ENCODE measurements at regions of chr5 and their contacts with region 1.

Region 1: DNA sequence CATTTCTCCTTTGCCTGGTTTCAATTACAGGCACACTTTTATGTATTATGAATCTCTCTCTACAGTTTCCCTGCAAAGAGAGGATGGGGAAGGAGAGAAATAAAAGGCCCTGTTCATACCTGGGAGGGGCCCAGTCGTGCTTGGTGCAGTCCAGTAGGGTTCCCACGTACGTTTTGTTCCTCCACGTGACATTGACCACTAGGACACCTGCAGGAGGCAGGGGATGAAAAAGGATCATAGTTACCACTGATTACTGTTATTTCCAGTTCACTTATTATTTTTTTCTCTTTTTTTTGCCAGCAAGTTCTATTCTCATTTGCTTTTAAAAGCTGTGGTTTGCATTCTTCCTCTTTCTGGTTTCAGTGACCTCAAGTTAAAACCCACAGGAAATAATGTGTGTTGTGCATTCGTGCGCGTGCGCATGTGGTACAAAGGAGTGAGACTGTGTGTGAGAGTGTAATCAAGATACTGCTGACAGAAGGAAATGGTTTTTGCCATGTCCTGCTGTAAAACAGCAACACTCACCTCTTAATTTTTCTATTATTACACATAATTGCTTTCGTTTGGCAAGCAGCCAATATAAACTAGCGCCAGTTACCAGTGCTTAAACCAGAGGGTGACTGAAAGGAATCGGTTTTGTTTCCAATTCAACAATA is 96.8 kb downstream of the ZNF608 start:
- DNase-seq: peak; percentile 93

Region 2: GRCh38 chr5:123844873-123845272 is 804.7 kb before region 1 on chr5:
- intact Hi-C with region 1: loop called in 1 of 2 experiments (anchors 5 kb)
- DNase-seq: no peak

Measured in posterior vena cava (tissue), 2 donors.